ENCODE measurements at regions of chr19 and their contacts with region 1.

Region 1: GRCh38 chr19:51926784-51927742 is at the start of gene ZNF613:
- DNase-seq: peak; percentile 89
- H3K4me3 ChIP-seq: peak within 1 kb of the TSS; percentile 56 to 62
- H3K27ac ChIP-seq: peak within 1 kb of the TSS; percentile 90
- H3K4me1 ChIP-seq: no peaks in the 10 kb centered on the region
- H3K27me3 ChIP-seq: no peaks in the 10 kb centered on the region
- CTCF ChIP-seq: peak in 1 of 4 experiments; percentile 54
- POLR2A ChIP-seq: no peak
- total RNA-seq, gene ZNF613: 15.4 to 17.0 TPM

Region 2: DNA sequence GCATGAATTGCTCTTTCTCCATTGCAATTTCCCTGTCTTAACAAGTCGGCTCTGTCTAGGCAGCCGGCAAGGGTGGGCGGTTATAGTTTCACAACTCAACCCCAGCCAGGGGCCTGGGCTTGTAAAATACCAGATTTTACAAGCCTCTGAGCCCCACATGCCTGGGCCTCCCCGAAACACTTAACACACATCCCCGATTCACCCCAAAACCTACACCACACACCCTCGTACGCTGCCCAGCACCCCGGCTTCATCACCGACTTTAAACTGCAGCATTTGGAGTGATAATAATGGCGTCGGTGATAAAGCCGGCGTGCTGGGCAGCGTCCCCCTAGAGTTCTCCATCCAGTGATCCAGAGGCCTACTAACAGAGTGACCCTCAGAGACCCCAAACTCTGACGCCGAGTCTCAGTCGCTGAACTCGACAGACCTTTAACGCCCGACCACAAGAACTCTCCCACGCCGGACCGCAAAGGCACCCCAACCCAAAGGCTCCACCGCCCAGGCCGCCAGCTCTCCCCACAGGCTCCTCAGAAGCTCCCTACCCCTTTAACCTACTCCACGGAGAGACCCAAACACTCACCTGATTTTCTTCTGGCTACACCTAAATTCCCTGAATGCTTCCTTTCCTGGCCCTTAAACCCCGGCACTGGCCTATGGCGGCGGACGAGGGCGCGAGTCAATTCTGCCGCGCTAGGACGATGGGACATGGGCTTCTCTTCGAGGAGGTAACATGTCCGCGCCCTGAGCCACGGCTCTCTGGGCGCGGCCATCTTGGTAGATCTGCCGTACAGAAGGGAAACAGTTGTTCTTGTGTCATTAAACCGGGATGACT is 22.5 kb before region 1 on chr19 and contains the start of gene ZNF649:
- intact Hi-C with region 1: loop called (anchors 2 kb)
- DNase-seq: peak; percentile 81
- H3K4me3 ChIP-seq: peak within 1 kb of the TSS; percentile 63
- H3K27ac ChIP-seq: peak within 1 kb of the TSS; percentile 91 to 94
- H3K4me1 ChIP-seq: no peaks in the 10 kb centered on the region
- H3K27me3 ChIP-seq: no peaks in the 10 kb centered on the region
- CTCF ChIP-seq: no peak
- POLR2A ChIP-seq: peak; percentile 22
- total RNA-seq, gene ZNF649: 26.5 to 33.5 TPM

Region 3: DNA sequence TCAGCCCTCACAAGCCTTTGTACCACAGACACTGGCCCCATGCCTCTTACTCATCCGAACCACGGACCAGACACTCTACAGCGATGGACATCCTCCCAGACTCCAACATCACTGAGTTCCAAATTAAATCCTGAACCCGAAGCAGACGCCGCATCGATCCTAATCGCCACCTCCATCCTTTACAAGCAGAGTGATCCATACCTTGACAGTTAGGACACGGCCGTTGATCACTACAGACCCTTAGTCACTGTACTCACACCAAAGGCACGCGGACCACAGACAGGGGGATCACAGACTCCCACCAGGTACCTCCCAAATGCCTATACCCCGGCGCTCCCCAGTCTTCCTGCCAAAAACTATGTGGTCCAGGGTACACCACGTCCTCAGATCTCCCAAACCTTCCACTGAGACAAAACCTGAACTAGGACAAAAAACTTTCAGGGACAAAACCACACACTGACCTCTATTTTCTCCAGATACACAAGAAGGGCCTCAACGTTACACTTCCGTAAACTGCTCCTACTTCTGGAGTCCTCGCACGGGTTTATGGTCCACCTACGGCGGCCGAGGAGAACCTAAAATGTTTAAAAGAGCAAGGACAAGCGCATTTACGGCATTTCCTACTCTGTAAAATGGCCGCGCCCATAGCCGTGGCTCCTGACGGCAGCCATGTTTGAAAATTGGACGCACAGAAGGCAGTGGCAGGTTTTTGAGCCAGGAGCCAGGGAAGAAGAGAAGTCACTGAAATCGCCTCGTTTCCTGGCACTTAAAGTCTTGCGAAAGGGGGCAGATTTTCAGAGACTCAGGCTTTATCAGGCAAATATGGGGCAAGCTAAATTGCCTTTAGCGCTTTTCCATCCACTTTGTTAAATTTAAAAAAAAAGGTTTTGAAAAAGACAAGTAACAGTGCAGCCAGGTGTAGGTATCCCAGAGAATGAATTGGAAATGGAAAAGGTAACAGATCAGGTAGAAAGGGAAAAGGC is 59.5 kb after region 1 on chr19 and contains the start of gene ZNF350:
- intact Hi-C with region 1: loop called (anchors 5 kb)
- DNase-seq: peak; percentile 98
- H3K4me3 ChIP-seq: peak within 1 kb of the TSS; percentile 86 to 89
- H3K27ac ChIP-seq: peak within 1 kb of the TSS; percentile 83 to 88
- H3K4me1 ChIP-seq: no peaks in the 10 kb centered on the region
- H3K27me3 ChIP-seq: no peaks in the 10 kb centered on the region
- CTCF ChIP-seq: peak in 1 of 4 experiments; percentile 7
- POLR2A ChIP-seq: no peak
- total RNA-seq, gene ZNF350: 31.3 to 34.6 TPM